ENCODE measurements at regions of chr1 and their contacts with region 1.

Region 1: DNA sequence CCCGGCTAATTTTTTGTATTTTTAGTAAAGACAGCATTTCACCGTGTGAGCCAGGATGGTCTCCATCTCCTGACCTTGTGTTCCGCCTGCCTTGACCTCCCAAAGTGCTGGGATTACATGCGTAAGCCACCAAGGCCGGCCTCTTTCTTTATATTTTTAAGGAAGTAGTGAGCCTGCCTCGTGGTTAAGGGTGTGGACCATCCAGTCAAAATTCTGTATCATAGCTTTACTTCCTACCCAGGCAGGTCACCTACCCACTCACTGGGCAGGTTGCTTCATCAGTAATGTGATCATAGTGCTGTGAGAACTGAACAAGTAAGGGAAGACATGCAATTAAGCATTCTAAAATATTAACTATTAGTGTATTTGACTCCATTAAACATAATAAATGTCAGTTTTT is 8.1 kb upstream of the ACOT7 start:
- DNase-seq: no peak
- H3K4me3 ChIP-seq: no peak overlapping the region
- H3K27ac ChIP-seq: no peak overlapping the region
- H3K4me1 ChIP-seq: no peaks in the 10 kb centered on the region
- H3K27me3 ChIP-seq: no peaks in the 10 kb centered on the region
- CTCF ChIP-seq: no peak
- EP300 ChIP-seq: no peak
- RAD21 ChIP-seq: no peak

Region 2: DNA sequence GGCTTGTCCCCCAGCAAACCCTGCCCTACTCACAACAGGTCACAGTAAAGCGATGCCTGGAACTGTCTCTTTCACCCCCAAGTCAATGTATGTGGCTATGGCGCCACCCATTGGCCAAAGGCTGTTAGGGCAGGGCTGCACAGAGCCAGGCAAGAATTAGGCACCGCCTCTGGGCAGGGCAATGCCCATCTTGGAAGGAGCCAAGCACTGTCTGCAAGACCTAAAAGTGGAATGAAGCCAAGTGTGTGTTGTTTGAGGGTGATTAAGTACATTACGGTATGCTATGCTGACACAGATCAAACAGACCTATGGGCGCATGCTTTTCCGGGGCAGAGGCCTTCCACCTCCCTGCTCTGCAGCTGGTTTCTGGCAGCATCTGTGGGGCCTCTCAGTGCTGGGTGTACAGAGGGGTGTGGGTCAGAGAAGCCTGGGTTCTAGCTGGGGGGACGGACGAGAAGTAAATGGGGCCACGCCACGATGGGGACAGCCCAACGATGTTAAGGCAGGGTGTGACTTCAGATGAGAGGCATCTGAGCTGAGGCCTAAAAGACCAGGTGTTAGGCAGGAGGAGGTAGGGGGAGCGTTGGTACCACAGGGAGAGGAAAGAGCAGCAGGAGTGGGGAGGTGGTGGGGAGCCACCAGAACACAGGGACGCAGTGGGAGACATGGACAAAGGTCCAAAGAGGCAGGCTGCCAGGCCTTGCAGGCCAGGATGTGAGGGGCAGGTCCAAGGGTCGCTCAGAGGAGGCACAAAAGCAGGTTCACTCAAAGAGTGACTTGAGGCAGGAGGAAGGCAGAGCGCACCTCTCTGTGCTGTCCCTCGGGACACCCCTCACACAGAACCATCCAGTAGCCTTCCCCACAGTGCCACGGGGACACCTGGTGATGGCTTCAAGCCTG is 57.9 kb before region 1 on chr1:
- CTCF ChIA-PET with region 1: interaction called, 15 read pairs
- POLR2A ChIA-PET with region 1: no interaction called
- DNase-seq: peak; percentile 83
- H3K4me3 ChIP-seq: peak overlapping the region in 1 of 2 experiments; percentile 55; a peak in 1 of 4 replicates
- H3K27ac ChIP-seq: no peak overlapping the region
- H3K4me1 ChIP-seq: no peaks in the 10 kb centered on the region; a peak in 1 of 4 replicates
- H3K27me3 ChIP-seq: no peaks in the 10 kb centered on the region
- CTCF ChIP-seq: peak; percentile 88
- EP300 ChIP-seq: no peak
- RAD21 ChIP-seq: peak; percentile 93

Region 3: GRCh38 chr1:6359216-6360116 is 42.2 kb before region 1 on chr1:
- CTCF ChIA-PET with region 1: interaction called, 65 read pairs
- POLR2A ChIA-PET with region 1: no interaction called
- DNase-seq: peak; percentile 81
- H3K4me3 ChIP-seq: no peak overlapping the region
- H3K27ac ChIP-seq: peak overlapping the region; percentile 69 to 79
- H3K4me1 ChIP-seq: peaks cover 10 to 67% of the 10 kb centered on the region in 2 experiments
- H3K27me3 ChIP-seq: no peaks in the 10 kb centered on the region
- CTCF ChIP-seq: 0 out of 2 replicates have a peak, but pooled peaks have one; percentile 11
- EP300 ChIP-seq: peak in 1 of 2 experiments; percentile 37; a peak in 1 of 4 replicates
- RAD21 ChIP-seq: no peak; the same call in 1 of the 2 replicates

Region 4: DNA sequence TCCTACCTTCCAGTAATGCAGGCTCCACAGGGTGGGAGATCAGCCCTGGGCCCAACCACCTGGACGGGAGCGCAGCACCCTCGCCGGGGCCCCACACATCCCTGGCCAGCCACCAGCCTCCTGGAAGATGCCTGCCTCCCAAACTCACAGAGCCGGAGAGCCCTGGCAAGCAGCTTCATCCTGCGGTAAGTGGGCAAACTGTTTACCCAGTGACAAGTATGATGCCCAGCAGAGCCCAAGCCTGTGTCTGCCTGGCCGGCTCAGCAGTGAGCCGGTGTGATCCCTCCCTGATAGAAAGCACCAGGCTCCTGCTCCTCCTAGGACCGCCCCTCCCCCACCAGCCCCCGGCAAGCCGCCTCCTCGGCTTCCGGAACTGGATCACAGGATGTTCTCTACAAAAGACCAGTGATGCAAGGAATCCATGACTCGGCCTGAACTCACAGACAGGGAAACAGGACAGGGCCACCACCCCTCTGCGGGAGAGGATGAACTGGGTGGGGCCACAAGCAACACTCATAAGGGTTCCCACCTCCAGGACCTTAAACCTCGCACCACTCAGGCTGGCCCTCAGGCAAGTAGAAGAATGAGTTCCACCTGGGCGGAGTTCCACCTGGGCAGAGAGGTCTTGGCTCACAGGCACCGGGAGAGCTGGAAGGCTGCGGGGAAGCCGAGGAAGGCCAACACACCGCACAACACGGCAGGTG is 16.0 kb before region 1 on chr1:
- CTCF ChIA-PET with region 1: interaction called, 14 read pairs
- POLR2A ChIA-PET with region 1: no interaction called
- DNase-seq: peak; percentile 93
- H3K4me3 ChIP-seq: peak overlapping the region; percentile 45 to 66
- H3K27ac ChIP-seq: peak overlapping the region; percentile 73 to 93
- H3K4me1 ChIP-seq: peaks cover 0 to 24% of the 10 kb centered on the region in 2 experiments; a peak in 2 of 4 replicates
- H3K27me3 ChIP-seq: no peaks in the 10 kb centered on the region
- CTCF ChIP-seq: no peak
- EP300 ChIP-seq: peak in 1 of 2 experiments; percentile 69; a peak in 2 of 4 replicates
- RAD21 ChIP-seq: no peak

Region 5: GRCh38 chr1:6423321-6423999 is 21.8 kb after region 1 on chr1:
- CTCF ChIA-PET with region 1: interaction called, 12 read pairs
- POLR2A ChIA-PET with region 1: no interaction called
- DNase-seq: peak; percentile 81
- H3K4me3 ChIP-seq: 0 out of 4 replicates have a peak overlapping the region, but pooled peaks of 1 of the 2 experiments have one; percentile 11
- H3K27ac ChIP-seq: no peak overlapping the region
- H3K4me1 ChIP-seq: peaks cover 6 to 18% of the 10 kb centered on the region in 2 experiments; a peak in 1 of 4 replicates
- H3K27me3 ChIP-seq: peaks cover 26% of the 10 kb centered on the region
- CTCF ChIP-seq: peak; percentile 65
- EP300 ChIP-seq: no peak
- RAD21 ChIP-seq: peak; percentile 42

Region 6: DNA sequence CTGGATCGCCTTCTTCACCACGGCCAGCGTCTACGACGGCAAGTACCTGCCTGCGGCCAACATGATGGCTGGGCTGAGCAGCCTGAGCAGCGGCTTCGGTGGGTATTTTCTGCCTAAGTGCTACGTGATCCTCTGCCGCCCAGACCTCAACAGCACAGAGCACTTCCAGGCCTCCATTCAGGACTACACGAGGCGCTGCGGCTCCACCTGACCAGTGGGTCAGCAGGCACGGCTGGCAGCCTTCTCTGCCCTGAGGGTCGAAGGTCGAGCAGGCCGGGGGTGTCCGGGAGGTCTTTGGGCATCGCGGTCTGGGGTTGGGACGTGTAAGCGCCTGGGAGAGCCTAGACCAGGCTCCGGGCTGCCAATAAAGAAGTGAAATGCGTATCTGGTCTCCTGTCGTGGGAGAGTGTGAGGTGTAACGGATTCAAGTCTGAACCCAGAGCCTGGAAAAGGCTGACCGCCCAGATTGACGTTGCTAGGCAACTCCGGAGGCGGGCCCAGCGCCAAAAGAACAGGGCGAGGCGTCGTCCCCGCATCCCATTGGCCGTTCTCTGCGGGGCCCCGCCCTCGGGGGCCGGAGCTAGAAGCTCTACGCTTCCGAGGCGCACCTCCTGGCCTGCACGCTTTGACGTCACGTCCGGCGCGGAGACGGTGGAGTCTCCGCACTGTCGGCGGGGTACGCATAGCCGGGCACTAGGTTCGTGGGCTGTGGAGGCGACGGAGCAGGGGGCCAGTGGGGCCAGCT is 177.9 kb after region 1 on chr1 and contains the start of gene ZBTB48:
- CTCF ChIA-PET with region 1: no interaction called
- POLR2A ChIA-PET with region 1: no interaction called
- DNase-seq: peak; percentile 100
- H3K4me3 ChIP-seq: peak within 1 kb of the TSS; percentile 73 to 84
- H3K27ac ChIP-seq: peak within 1 kb of the TSS; percentile 76 to 88
- H3K4me1 ChIP-seq: peaks cover 14 to 32% of the 10 kb centered on the region in 2 experiments; a peak in 2 of 4 replicates
- H3K27me3 ChIP-seq: no peaks in the 10 kb centered on the region
- CTCF ChIP-seq: no peak
- EP300 ChIP-seq: no peak
- RAD21 ChIP-seq: no peak
- polyA plus RNA-seq, gene ZBTB48: 28.8 and 31.2 TPM in 2 replicates

Measured in SK-N-SH (cell line).